B cell (primary cell): ENCODE measurements at regions of chr19 and their contacts with region 1.

Region 1: DNA sequence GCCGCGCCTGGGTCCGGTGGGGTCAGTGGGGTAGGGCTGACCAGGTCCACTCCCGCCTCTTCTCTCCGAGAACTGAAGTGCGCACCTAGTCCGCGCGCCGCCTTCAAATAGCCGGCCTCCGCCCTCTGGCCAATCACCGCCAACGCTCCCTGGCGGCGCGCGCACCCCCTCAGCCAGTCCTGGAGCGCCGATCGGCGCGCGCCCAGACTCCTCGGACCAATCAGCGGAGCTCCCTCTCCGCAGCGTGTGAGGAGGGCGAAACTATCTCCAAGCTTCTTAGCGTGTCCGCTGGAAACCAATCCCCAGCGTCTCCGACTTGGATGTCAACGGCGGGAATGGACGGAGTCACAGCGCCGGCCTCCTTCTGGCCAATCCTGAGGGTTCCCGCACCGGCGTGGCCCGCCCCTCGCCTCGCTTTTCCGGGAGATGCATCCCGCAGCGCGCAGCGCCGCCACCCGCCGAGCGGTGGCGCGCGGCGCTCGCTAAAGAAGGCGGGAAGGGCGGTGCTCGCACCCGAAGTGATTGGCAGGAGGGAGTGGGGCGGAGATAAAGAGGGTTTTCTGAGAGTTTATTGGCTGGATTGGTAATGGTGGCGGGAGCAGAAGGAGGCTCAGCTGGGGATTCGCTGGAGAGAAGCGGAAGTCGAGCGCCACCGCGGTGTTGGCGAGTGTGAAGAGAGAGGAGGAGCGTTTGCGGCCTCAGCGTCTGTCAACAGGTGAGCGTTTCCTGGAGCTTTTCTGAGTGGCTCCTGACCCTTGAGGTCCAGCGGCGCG is at the start of gene ASF1B:
- DNase-seq: peak; percentile 99
- ATAC-seq: peak; percentile 79
- H3K4me3 ChIP-seq: peak within 1 kb of the TSS; percentile 44 to 94 (median 77)
- H3K4me3 Mint-ChIP-seq: peak within 1 kb of the TSS; percentile 88
- H3K27ac ChIP-seq: peak within 1 kb of the TSS; percentile 88 to 93
- H3K27ac Mint-ChIP-seq: peak within 1 kb of the TSS; percentile 92
- H3K4me1 ChIP-seq: peaks cover 9 to 23% of the 10 kb centered on the region in 2 donors
- H3K4me1 Mint-ChIP-seq: peaks cover 18% of the 10 kb centered on the region
- H3K27me3 ChIP-seq: no peaks in the 10 kb centered on the region
- H3K27me3 Mint-ChIP-seq: no peaks in the 10 kb centered on the region
- CTCF ChIP-seq: peak; percentile 87
- total RNA-seq, gene ASF1B: 2.5 and 4.0 TPM in 2 replicates

Region 2: GRCh38 chr19:13794757-13795589 is 341.7 kb before region 1 on chr19 and contains the start of gene ZSWIM4:
- CTCF ChIA-PET with region 1: interaction called, 3 read pairs
- POLR2A ChIA-PET with region 1: no interaction called
- intact Hi-C with region 1: loop called (anchors 1 kb)
- DNase-seq: peak; percentile 97
- ATAC-seq: peak; percentile 95
- H3K4me3 ChIP-seq: peak within 1 kb of the TSS; percentile 44 to 81 (median 68)
- H3K4me3 Mint-ChIP-seq: peak within 1 kb of the TSS; percentile 98
- H3K27ac ChIP-seq: peak within 1 kb of the TSS; percentile 58 to 82
- H3K27ac Mint-ChIP-seq: peak within 1 kb of the TSS; percentile 95
- H3K4me1 ChIP-seq: peaks cover 21 to 26% of the 10 kb centered on the region in 2 donors
- H3K4me1 Mint-ChIP-seq: peaks cover 36% of the 10 kb centered on the region
- H3K27me3 ChIP-seq: no peaks in the 10 kb centered on the region
- H3K27me3 Mint-ChIP-seq: no peaks in the 10 kb centered on the region
- CTCF ChIP-seq: no peak
- total RNA-seq, gene ZSWIM4: 10.1 and 10.6 TPM in 2 replicates

Region 3: DNA sequence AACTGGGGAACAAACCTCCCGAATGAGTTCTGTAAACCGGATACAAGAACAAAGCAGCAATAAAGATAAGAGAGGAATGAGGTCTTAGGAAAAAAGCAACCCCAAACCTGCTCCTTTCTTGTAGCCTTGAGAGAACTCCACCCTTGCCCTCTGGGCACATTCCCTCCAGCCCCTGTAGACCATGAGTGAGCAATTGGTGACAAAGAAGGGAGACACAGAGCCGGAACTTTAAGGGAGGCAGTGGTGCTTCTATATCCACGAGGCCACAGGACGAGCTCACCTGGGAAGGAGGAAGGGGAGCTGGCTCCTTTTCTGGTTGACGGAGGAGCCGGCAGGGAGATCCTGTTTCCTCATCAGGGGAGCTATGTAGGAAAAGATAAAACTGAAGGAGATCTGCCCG is 243.8 kb before region 1 on chr19:
- CTCF ChIA-PET with region 1: no interaction called
- POLR2A ChIA-PET with region 1: no interaction called
- intact Hi-C with region 1: no loop called
- DNase-seq: no peak
- ATAC-seq: no peak
- H3K4me3 ChIP-seq: no peak overlapping the region
- H3K4me3 Mint-ChIP-seq: no peak overlapping the region
- H3K27ac ChIP-seq: no peak overlapping the region
- H3K27ac Mint-ChIP-seq: no peak overlapping the region
- H3K4me1 ChIP-seq: no peaks in the 10 kb centered on the region
- H3K4me1 Mint-ChIP-seq: no peaks in the 10 kb centered on the region
- H3K27me3 ChIP-seq: no peaks in the 10 kb centered on the region
- H3K27me3 Mint-ChIP-seq: no peaks in the 10 kb centered on the region
- CTCF ChIP-seq: no peak

Region 4: GRCh38 chr19:14073261-14073924 is 63.3 kb before region 1 on chr19:
- CTCF ChIA-PET with region 1: interaction called, 44 read pairs
- POLR2A ChIA-PET with region 1: interaction called, 3 read pairs
- intact Hi-C with region 1: loop called (anchors 1 kb)
- DNase-seq: peak; percentile 92
- ATAC-seq: peak; percentile 64
- H3K4me3 ChIP-seq: peak overlapping the region; percentile 47 to 79 (median 59)
- H3K4me3 Mint-ChIP-seq: peak overlapping the region; percentile 87
- H3K27ac ChIP-seq: no peak overlapping the region
- H3K27ac Mint-ChIP-seq: peak overlapping the region; percentile 34
- H3K4me1 ChIP-seq: peaks cover 31 to 35% of the 10 kb centered on the region in 2 donors
- H3K4me1 Mint-ChIP-seq: peaks cover 26% of the 10 kb centered on the region
- H3K27me3 ChIP-seq: peaks cover 0 to 18% (median 5%) of the 10 kb centered on the region in 4 experiments
- H3K27me3 Mint-ChIP-seq: peaks cover 5% of the 10 kb centered on the region
- CTCF ChIP-seq: peak; percentile 44

Region 5: DNA sequence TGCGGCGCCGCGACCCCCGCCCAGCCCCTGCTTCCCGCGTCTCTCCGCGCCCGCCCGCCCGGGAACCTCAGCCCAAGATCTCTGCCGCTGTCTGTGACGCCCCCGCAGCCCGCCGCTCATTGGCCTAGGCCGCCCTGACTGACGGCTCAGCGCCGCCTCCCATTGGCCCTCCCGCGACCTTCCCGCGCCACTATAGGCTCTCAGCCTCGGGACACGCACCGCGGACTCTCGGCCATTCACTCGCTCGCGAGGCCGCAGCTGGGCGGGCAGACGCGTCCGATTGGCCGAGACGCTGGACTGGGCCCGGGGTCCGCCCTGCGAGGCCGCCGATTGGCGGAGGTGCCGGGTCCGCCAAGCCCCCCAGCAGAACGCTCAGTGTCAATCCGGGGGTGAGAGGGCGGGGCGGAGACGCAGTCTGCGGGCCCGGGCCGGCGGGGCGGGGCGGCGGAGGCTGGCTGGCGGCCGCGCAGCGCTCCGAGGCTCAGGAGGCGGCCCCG is 19.0 kb before region 1 on chr19 and contains the start of gene PRKACA:
- CTCF ChIA-PET with region 1: interaction called, 12 read pairs
- POLR2A ChIA-PET with region 1: interaction called, 3 read pairs
- intact Hi-C with region 1: loop called (anchors 1 kb)
- DNase-seq: peak; percentile 98
- ATAC-seq: peak; percentile 93
- H3K4me3 ChIP-seq: peak within 1 kb of the TSS; percentile 54 to 74 (median 66)
- H3K4me3 Mint-ChIP-seq: peak within 1 kb of the TSS; percentile 94
- H3K27ac ChIP-seq: peak within 1 kb of the TSS; percentile 24 to 77
- H3K27ac Mint-ChIP-seq: peak within 1 kb of the TSS; percentile 87
- H3K4me1 ChIP-seq: peaks cover 36 to 38% of the 10 kb centered on the region in 2 donors
- H3K4me1 Mint-ChIP-seq: peaks cover 39% of the 10 kb centered on the region
- H3K27me3 ChIP-seq: no peaks in the 10 kb centered on the region
- H3K27me3 Mint-ChIP-seq: no peaks in the 10 kb centered on the region
- CTCF ChIP-seq: no peak
- total RNA-seq, gene PRKACA: 43.0 and 48.8 TPM in 2 replicates

Region 6: GRCh38 chr19:14405758-14406644 is 269.3 kb after region 1 on chr19:
- CTCF ChIA-PET with region 1: interaction called, 14 read pairs
- POLR2A ChIA-PET with region 1: interaction called, 3 read pairs
- intact Hi-C with region 1: loop called (anchors 2 kb)
- DNase-seq: peak; percentile 93
- ATAC-seq: peak; percentile 89
- H3K4me3 ChIP-seq: peak overlapping the region in 3 of 5 experiments; percentile 11 to 36 (median 11)
- H3K4me3 Mint-ChIP-seq: peak overlapping the region; percentile 59
- H3K27ac ChIP-seq: peak overlapping the region in 1 of 2 donors; percentile 11
- H3K27ac Mint-ChIP-seq: peak overlapping the region; percentile 88
- H3K4me1 ChIP-seq: peaks cover 7 to 34% of the 10 kb centered on the region in 2 donors
- H3K4me1 Mint-ChIP-seq: peaks cover 41% of the 10 kb centered on the region
- H3K27me3 ChIP-seq: no peaks in the 10 kb centered on the region
- H3K27me3 Mint-ChIP-seq: no peaks in the 10 kb centered on the region
- CTCF ChIP-seq: peak; percentile 87

Region 7: DNA sequence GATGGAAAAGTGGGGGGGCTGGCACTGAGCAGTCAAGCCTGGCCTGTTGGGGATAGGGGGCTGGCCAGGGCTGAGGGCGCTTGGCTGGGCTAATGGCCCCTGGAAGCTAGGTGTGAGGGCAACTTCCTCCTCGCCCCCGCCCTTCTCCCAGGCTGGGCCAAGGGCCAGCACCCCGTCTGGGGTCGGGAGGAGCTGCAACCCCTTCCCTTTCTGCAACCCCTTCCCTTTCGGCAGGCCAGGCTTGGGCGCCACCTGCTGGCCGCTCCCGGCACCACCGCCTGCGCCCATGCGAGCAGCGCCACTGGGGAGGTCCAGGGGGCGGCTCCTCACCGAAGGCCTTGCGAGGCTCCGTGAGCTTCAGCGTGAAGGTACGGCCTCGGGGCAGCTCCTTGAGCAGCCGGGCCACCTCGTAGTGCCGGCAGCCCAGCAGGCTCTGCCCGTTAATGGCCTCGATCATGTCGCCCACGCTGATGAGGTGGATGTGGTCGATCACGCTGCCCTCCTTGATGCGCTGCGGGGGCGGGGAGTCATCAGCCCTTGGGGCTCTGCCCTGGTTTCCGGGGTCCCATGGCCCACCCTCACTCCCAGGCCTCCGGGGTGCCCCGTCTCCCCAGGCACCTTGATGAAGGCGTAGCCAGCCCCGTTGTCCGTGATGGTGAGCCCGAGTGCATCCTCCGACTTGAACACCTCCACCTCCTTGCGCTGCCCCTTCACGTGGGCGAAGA is 343.4 kb after region 1 on chr19:
- CTCF ChIA-PET with region 1: interaction called, 15 read pairs
- POLR2A ChIA-PET with region 1: interaction called, 3 read pairs
- intact Hi-C with region 1: no loop called
- DNase-seq: peak; percentile 74
- ATAC-seq: peak; percentile 76
- H3K4me3 ChIP-seq: no peak overlapping the region
- H3K4me3 Mint-ChIP-seq: no peak overlapping the region
- H3K27ac ChIP-seq: no peak overlapping the region
- H3K27ac Mint-ChIP-seq: no peak overlapping the region
- H3K4me1 ChIP-seq: peaks cover 8 to 12% of the 10 kb centered on the region in 2 donors
- H3K4me1 Mint-ChIP-seq: peaks cover 8% of the 10 kb centered on the region
- H3K27me3 ChIP-seq: peaks cover 0 to 10% (median 3%) of the 10 kb centered on the region in 4 experiments
- H3K27me3 Mint-ChIP-seq: peaks cover 13% of the 10 kb centered on the region
- CTCF ChIP-seq: peak; percentile 93